ENCODE measurements at regions of chr2 and their contacts with region 1.

Region 1: GRCh38 chr2:230411570-230412370 is 4.2 kb upstream of the SP100 start:
- DNase-seq: peak; percentile 76
- H3K4me3 Mint-ChIP-seq: peak overlapping the region; percentile 93
- H3K27ac Mint-ChIP-seq: peak overlapping the region; percentile 99
- H3K4me1 Mint-ChIP-seq: peaks cover 79% of the 10 kb centered on the region
- H3K27me3 Mint-ChIP-seq: no peaks in the 10 kb centered on the region

Region 2: GRCh38 chr2:230225486-230225885 is 186.3 kb before region 1 on chr2 and contains the start of gene SP140:
- intact Hi-C with region 1: loop called (anchors 1 kb)
- DNase-seq: peak; percentile 80
- H3K4me3 Mint-ChIP-seq: peak within 1 kb of the TSS; percentile 91
- H3K27ac Mint-ChIP-seq: peak within 1 kb of the TSS; percentile 98
- H3K4me1 Mint-ChIP-seq: peaks cover 63% of the 10 kb centered on the region
- H3K27me3 Mint-ChIP-seq: no peaks in the 10 kb centered on the region
- total RNA-seq, gene SP140: 235 and 243 TPM in 2 replicates

Region 3: DNA sequence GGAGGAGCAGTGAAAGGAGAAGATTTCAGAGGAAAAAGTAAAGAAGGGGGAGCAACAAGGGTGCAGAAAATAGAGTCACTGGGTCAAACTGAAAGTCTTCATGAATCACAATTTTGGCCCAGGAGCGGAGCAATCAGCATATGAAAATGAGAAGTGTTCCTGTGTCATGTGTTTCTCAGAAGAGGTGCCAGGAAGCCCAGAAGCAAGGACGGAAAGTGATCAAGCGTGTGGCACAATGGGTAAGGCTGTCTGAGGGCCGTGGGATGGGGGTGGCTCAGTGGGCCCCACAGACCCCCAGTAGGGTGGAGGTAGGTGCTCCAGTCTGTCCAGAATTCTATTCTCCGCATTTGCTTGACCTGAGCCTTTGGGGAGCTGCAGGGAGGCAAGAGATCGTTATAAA is 142.1 kb before region 1 on chr2:
- intact Hi-C with region 1: no loop called
- DNase-seq: no peak
- H3K4me3 Mint-ChIP-seq: peak overlapping the region; percentile 24
- H3K27ac Mint-ChIP-seq: peak overlapping the region; percentile 76
- H3K4me1 Mint-ChIP-seq: peaks cover 58% of the 10 kb centered on the region
- H3K27me3 Mint-ChIP-seq: no peaks in the 10 kb centered on the region

Region 4: GRCh38 chr2:230319211-230319862 is 92.4 kb before region 1 on chr2:
- intact Hi-C with region 1: loop called (anchors 2 kb)
- DNase-seq: peak; percentile 76
- H3K4me3 Mint-ChIP-seq: peak overlapping the region; percentile 45
- H3K27ac Mint-ChIP-seq: peak overlapping the region; percentile 89
- H3K4me1 Mint-ChIP-seq: peaks cover 76% of the 10 kb centered on the region
- H3K27me3 Mint-ChIP-seq: no peaks in the 10 kb centered on the region

Region 5: DNA sequence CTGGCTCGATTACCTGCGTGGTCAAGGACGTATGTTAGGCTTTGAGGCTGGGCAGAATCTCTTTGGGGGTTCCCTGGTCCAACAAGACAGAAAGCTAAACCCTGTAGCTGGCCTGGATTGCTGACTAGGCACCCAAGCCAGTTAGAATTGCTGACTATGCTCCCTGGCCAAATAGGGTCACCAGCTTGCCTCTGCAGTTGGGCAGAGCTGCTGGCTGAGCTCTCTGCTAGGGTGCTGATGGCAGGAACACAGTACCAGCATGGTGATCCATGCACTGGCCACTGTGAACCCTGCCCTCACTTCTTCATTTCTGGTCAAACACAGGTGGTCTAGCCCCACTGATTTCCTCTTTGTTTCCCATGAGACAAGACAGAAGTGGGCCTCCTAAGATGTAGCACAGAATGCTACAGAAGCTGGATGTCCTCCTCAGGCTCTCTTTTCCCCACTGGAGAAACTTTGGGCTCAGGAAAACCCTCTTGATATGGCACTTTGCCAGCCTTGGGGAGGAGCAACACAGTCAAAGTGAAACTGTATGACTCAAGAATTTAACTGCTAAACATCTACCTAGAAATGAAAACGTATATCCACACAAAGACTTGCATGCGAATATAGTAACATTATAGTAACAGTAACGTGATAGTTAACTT is 64.0 kb before region 1 on chr2:
- intact Hi-C with region 1: loop called (anchors 5 kb)
- DNase-seq: peak; percentile 32
- H3K4me3 Mint-ChIP-seq: peak overlapping the region; percentile 59
- H3K27ac Mint-ChIP-seq: peak overlapping the region; percentile 90
- H3K4me1 Mint-ChIP-seq: peaks cover 80% of the 10 kb centered on the region
- H3K27me3 Mint-ChIP-seq: no peaks in the 10 kb centered on the region

Region 6: DNA sequence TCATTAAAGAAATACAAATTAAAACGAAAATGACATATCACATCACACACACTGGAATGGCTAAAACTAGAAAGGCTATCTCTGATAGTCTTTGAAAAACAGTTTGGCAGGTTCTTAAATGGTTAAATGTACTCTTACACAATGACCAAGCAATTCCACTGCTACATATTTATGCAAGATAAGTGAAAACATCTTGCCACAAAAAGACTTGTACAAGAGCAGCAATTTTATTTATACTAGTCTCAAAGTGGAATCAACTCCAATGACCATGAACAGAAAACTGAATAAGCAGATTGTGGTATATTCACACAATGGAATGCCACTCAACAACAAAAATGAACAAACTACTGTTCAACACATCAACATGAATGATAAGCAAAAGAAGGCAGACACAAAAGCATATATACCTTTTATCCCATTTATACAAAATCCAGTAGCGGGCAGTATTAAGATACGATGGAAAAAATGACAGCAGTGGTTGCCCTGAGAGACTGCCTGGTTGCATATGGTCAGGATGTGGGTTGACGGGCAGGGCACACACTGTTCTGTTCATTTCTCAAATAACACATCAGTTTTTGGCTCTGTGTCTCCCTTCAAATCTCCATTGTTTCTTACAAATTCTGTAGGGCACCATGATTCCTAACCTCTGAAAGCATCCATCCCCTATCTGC is 29.6 kb after region 1 on chr2:
- intact Hi-C with region 1: loop called (anchors 1 kb)
- DNase-seq: peak; percentile 34
- H3K4me3 Mint-ChIP-seq: peak overlapping the region; percentile 31
- H3K27ac Mint-ChIP-seq: peak overlapping the region; percentile 90
- H3K4me1 Mint-ChIP-seq: peaks cover 65% of the 10 kb centered on the region
- H3K27me3 Mint-ChIP-seq: no peaks in the 10 kb centered on the region

Region 7: GRCh38 chr2:230798769-230799399 is 387.1 kb after region 1 on chr2:
- intact Hi-C with region 1: loop called (anchors 5 kb)
- DNase-seq: peak; percentile 27
- H3K4me3 Mint-ChIP-seq: no peak overlapping the region
- H3K27ac Mint-ChIP-seq: no peak overlapping the region
- H3K4me1 Mint-ChIP-seq: peaks cover 26% of the 10 kb centered on the region
- H3K27me3 Mint-ChIP-seq: peaks cover under 1% of the 10 kb centered on the region

Region 8: DNA sequence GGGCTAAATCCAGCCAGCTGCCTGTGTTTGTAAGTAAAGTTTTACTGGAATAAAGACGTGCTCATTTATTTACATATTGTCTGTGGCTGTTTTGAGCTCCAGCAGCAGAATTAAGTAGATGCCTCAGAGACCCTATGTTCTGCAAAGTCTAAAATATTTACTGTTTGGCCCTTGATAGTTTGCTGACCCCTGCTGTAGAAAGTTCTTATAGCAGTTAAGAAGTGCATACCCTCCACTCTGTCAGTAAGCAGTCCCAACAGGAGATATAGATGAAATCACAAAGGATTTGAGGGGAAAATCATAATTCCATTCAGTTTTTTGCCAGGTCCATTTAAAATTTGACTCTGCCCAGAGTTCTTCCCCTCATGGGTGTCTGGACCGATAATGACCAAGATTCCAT is 402.8 kb after region 1 on chr2:
- intact Hi-C with region 1: no loop called
- DNase-seq: no peak
- H3K4me3 Mint-ChIP-seq: no peak overlapping the region
- H3K27ac Mint-ChIP-seq: no peak overlapping the region
- H3K4me1 Mint-ChIP-seq: peaks cover 39% of the 10 kb centered on the region
- H3K27me3 Mint-ChIP-seq: no peaks in the 10 kb centered on the region

Measured in activated T-helper 1 cell treated with anti-CD3 and anti-CD28 coated beads, Interleukin-12 subunit alpha, Interleukin-12 subunit beta, Interleukin-2, Interleukin-4 antibody, amounts not matched to agents 30 ng/mL and 10 ng/mL and 1 ng/mL, durations not matched to agents 14 hours and 24 hours and 36 hours (primary cell).